HEK293 (cell line): ENCODE measurements at regions of chr11 and their contacts with region 1.

Region 1: GRCh38 chr11:46295312-46296058 is 18.0 kb downstream of the CREB3L1 start:
- H3K4me3 ChIP-seq: peak overlapping the region; percentile 44
- H3K27ac ChIP-seq: no peak overlapping the region
- H3K4me1 ChIP-seq: peaks cover 4% of the 10 kb centered on the region; the same call in 1 of the 2 replicates
- CTCF ChIP-seq: no peak

Region 2: DNA sequence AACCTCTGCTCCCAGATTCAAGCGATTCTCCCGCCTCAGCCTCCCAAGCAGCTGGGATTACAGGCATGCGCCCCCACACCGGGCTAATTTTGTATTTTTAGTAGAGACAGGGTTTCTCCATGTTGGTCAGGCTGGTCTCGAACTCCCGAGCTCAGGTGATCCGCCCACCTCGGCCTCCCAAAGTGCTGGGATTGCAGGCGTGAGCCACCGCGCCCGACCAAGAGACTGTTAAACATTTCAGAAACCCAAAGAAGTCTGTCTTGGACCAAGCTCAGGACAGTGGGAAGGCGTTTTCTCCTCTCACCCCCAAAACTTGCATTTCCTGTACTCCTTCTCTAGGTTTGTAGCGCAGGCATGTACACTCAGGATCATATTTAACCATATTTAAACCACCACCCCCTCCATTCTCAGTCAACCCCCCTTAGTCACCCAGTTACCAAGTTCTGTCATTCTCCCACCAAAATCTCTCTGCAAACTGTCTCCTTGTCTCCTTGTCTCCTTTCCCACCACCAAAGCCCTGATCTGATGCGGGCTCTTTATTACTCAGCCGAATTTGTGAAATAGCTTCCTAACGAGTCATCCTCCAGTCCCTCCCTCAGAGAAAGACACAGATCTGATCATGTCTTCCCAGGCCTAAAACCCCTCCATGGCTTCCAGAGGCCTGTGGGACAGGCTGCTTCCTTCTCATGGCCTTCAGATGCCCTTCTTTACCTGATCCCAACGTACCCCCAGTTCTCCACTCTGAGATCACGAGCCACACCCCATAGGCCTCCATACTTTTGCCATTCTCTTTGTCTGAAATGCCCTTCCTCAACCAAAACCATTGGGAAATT is 47.0 kb before region 1 on chr11:
- CTCF ChIA-PET with region 1: interaction called, 58 read pairs
- POLR2A ChIA-PET with region 1: interaction called, 28 read pairs
- H3K4me3 ChIP-seq: no peak overlapping the region
- H3K27ac ChIP-seq: no peak overlapping the region
- H3K4me1 ChIP-seq: no peaks in the 10 kb centered on the region
- CTCF ChIP-seq: no peak

Region 3: DNA sequence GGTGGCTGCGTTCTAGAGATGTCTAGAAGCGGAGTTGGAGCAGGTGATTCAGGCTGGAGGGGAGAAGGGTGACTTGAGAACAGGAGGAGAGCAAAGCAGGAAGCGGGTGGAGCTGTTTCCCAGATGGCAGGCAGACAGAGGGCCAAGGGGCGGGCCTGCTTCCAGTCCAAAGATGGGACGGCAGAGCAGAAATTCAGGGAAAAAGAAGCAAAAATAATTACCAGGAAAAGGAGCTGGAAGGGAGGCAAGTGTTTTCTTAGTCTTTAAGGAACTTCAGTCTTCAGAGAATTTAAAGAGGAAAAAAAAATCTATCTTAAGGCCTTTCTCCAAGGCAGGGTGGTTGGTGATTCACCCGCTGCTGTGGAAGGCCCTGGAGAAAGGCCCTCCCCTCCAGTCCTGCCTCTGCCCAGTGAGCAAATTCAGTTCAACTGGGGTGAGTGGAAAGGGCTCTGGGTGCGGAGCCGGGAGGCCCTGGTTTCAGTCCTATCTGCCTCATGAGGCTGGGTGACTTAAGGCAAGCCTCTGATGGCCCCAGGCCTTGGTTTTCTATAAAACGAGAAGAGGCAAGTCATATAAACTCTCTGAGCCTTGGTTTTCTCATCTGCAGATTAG is 22.6 kb before region 1 on chr11:
- CTCF ChIA-PET with region 1: interaction called, 26 read pairs
- POLR2A ChIA-PET with region 1: interaction called, 7 read pairs
- H3K4me3 ChIP-seq: no peak overlapping the region
- H3K27ac ChIP-seq: no peak overlapping the region
- H3K4me1 ChIP-seq: no peaks in the 10 kb centered on the region; the same call in 1 of the 2 replicates
- CTCF ChIP-seq: no peak

Region 4: DNA sequence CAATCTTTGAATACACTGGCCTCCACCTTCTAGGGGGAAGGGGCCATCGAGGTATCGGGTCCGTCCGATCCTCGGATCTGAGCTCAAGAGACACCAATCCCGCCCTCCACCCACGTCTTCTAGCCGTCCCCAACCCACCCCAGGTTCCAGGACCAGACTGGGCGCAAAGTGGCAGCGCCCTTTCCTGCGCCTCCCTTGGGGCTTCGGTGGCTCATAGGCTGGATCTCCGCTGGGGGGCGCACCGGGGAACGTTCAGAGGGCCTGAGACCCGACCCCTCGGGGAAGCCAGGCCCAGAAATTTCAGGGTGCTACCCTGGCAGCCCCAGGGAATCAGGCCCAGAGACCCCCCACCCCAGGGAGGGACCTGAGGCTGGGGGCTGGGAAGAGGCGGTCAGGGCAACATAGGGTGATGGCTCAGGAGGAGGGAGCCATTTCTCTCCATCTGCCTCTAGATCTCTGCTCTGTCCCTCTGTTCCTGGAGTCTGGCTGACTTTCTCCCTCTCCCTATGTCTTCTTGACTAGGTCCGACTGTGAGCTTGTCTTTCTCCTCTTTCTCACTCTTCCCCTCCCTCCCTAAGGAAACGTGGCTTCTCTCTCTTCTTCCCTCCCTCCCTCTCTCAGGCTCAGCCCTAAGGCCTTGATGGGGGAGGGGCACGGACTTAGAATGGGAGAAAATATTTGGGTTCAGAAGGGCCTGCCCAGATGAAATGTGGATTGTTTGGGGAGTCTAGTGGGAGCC is 16.9 kb before region 1 on chr11:
- CTCF ChIA-PET with region 1: interaction called, 26 read pairs
- POLR2A ChIA-PET with region 1: interaction called, 7 read pairs
- H3K4me3 ChIP-seq: peak overlapping the region; percentile 49
- H3K27ac ChIP-seq: no peak overlapping the region
- H3K4me1 ChIP-seq: no peaks in the 10 kb centered on the region; the same call in 1 of the 2 replicates
- CTCF ChIP-seq: no peak

Region 5: DNA sequence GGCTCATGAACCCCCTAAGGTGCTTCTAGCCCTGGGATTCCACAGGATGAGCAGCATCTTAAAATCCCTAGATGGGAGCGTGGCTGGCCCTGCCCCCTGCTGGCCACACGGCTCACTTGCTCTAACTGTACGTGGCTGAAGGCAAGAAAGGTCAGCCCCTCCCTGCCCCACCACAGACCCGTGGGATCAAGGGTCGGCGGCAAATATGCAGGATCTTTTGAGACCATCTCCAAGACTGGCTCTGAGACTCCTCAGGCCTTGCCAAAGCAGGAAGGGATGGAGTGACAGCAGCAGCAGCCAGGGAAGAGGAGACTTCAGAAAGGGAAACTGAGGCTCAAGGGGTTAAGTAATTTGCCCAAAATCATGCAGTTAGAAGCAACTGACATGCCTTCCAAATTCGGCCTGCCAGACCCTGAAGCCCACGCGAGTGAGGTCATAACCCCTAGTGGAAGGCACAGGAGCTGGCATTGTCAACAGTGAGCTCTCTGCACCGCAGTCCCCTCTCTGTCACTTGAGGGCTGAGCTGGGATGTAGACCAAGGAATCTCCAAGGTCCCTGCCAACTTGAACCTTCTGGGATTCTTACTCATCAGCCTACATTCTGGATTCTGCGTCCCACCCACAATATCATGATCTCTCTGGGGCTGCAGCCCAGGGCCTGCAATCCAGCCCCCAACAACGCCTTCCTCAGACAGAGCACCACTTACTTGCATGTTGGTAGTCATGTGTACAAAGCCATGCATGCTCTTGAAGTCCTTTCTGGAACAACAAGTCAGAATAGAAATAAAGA is 13.3 kb after region 1 on chr11:
- CTCF ChIA-PET with region 1: interaction called, 91 read pairs
- POLR2A ChIA-PET with region 1: interaction called, 6 read pairs
- H3K4me3 ChIP-seq: no peak overlapping the region
- H3K27ac ChIP-seq: no peak overlapping the region
- H3K4me1 ChIP-seq: no peaks in the 10 kb centered on the region
- CTCF ChIP-seq: peak; percentile 79

Region 6: GRCh38 chr11:46315033-46315738 is 19.7 kb after region 1 on chr11:
- CTCF ChIA-PET with region 1: interaction called, 91 read pairs
- POLR2A ChIA-PET with region 1: no interaction called
- H3K4me3 ChIP-seq: no peak overlapping the region
- H3K27ac ChIP-seq: no peak overlapping the region
- H3K4me1 ChIP-seq: no peaks in the 10 kb centered on the region
- CTCF ChIP-seq: no peak